Vagina (tissue), 2 donors: ENCODE measurements at regions of chr12 and their contacts with region 1.

Region 1: DNA sequence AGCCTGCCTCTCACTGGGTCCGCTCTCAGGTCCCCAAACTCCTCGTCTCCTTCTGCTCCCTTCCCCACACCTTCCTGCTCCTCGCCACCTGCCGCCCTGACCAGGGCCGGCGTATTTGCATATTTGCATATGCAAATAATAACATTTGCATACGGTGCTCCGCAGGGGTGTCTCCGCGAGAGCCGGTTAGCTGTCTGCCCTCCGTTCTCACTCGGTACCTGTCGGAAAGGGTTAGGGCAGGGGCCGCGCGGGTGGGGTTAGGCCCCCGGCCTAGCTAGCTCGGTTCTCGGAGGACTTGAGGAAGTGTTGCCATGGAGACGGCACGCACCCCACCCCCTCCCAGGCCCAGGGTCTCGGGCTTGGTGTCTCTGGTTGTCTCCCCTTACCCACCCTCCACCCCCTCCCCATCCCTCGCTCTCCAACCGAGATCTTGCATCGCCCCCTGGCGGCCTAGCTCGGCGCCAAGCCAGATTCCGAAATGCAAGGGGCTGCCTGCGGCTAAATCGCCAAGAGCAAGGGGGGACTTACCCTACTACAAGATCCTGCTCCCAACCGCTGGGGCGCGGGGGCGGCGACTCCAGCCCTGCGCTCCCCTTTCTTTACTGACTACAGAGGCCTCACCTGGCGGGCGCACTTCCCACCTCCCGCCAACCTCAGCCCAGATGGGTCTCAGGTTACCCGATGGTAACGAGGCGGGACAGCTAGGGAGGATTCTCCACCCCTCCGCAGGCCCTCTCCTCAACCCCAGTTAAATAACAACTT is 8.1 kb downstream of the STAC3 start:
- DNase-seq: no peak
- H3K4me3 ChIP-seq: peak overlapping the region; percentile 20 to 22
- H3K27ac ChIP-seq: no peak overlapping the region
- H3K4me1 ChIP-seq: peaks cover 61% of the 10 kb centered on the region
- H3K27me3 ChIP-seq: peaks cover 15% of the 10 kb centered on the region
- CTCF ChIP-seq: peak in 1 of 3 experiments; percentile 5
- POLR2A ChIP-seq: no peak

Region 2: DNA sequence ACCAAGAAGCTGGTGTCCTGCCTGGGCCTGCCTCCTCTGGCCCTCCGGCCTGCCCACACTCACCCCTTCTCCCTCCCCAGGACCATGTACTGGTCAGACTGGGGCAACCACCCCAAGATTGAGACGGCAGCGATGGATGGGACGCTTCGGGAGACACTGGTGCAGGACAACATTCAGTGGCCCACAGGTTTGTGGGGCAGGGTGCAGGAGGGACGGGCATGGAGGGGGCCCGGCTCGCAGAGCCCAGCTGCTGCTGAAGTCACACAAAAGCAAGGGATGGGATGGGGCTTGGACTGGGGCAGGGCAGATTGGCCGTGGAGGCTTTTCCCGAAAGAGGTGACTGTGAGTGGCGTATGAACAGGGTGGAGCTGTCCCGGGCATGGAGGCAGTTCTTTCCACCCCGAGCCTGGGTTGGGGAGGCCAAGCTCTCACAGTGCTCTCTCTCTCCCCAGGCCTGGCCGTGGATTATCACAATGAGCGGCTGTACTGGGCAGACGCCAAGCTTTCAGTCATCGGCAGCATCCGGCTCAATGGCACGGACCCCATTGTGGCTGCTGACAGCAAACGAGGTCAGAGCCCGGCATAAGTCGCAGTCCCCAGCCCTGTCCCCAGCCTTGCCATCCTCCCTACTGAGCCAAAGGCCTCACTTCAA is 34.1 kb before region 1 on chr12:
- intact Hi-C with region 1: loop called (anchors 5 kb)
- DNase-seq: no peak
- H3K4me3 ChIP-seq: no peak overlapping the region
- H3K27ac ChIP-seq: no peak overlapping the region
- H3K4me1 ChIP-seq: peaks cover 5% of the 10 kb centered on the region
- H3K27me3 ChIP-seq: no peaks in the 10 kb centered on the region
- CTCF ChIP-seq: no peak
- POLR2A ChIP-seq: no peak